ENCODE measurements at regions of chr12 and their contacts with region 1.

Region 1: DNA sequence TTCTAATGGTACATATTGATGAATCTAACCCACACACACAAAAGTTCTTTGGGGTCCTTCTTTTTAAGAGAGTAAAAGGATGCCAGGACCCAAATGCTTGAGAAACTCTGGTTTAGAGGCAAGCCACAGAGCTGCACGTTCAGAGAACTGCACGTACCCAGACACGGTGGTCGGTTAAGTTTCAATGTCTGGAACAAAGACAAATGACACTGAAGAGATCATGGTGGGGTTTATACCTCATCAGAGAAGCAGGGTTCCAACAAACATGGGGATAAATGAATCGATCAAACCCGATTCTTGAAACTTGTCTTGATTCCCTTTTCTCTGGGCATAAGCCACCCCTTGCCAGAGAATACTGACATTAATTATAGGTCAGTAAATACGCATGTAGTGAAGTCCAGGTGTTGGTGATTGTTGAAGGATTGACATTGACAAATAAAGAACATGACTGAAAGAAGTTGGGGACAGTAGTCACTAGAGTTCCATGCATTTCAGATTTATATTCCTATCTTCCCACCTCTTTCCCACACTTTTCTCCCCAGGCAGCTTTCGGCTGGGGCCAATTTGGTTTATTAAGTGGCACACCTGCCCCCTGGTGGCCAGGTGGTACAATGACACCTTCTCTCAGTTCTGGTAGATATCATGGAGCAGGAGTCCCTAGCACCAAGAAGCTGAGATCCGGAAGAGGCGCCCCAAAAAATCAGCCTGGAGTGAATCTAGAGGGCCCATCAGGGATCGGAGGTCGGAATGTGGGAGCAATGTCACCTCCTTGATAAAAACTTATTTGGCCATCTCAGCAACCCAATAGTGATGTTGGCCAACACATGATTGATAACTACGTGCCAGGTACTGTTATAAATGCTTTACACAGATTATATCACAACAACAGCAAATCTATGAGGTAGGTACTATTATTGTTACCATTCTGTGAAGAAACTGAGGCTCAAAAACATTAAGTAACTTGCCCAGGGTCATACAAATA is 17.8 kb upstream of the HDAC7 start:
- DNase-seq: peak; percentile 59
- ATAC-seq: peak; percentile 84
- H3K4me3 ChIP-seq: no peak overlapping the region
- H3K27ac ChIP-seq: peak overlapping the region; percentile 52; the same call in 1 of the 2 replicates
- H3K4me1 ChIP-seq: no peaks in the 10 kb centered on the region
- H3K27me3 ChIP-seq: peaks cover 3% of the 10 kb centered on the region; the same call in 1 of the 2 replicates
- CTCF ChIP-seq: peak; percentile 90

Region 2: GRCh38 chr12:47218191-47218654 is 619.3 kb before region 1 on chr12:
- CTCF ChIA-PET with region 1: interaction called, 12 read pairs
- POLR2A ChIA-PET with region 1: no interaction called
- in situ Hi-C with region 1: no loop called
- intact Hi-C with region 1: no loop called
- DNase-seq: no peak
- ATAC-seq: no peak
- H3K4me3 ChIP-seq: no peak overlapping the region
- H3K27ac ChIP-seq: no peak overlapping the region
- H3K4me1 ChIP-seq: peaks cover 6% of the 10 kb centered on the region; the same call in 1 of the 2 replicates
- H3K27me3 ChIP-seq: no peaks in the 10 kb centered on the region
- CTCF ChIP-seq: no peak

Region 3: DNA sequence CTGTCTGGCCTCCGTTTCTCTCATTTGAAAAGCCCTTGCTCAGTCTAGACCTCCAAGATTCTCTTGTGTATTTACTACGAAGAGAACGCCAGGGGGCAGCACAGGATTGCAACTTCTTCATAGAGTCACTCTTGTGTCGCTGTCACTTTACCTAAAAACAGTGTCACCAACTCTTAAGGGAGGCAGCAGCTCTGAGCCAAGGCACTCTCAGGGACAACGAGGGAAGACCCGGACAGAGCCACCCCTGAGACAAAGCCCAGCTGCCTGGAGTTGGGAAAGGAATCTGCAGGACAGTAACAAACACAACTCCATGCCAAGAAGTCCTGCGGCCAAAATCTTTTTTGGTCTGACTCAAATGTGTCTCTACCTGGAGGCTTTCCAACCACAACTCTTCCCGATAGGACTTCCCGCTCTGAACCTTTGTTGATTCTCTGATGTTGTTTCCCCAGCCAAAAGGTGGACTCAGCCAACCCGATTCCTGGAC is 122.0 kb before region 1 on chr12:
- CTCF ChIA-PET with region 1: interaction called, 4 read pairs
- POLR2A ChIA-PET with region 1: no interaction called
- in situ Hi-C with region 1: no loop called
- intact Hi-C with region 1: loop called (anchors 10 kb)
- DNase-seq: no peak
- ATAC-seq: peak; percentile 88
- H3K4me3 ChIP-seq: no peak overlapping the region
- H3K27ac ChIP-seq: no peak overlapping the region
- H3K4me1 ChIP-seq: peaks cover 3% of the 10 kb centered on the region; the same call in 1 of the 2 replicates
- H3K27me3 ChIP-seq: no peaks in the 10 kb centered on the region
- CTCF ChIP-seq: peak; percentile 88

Region 4: DNA sequence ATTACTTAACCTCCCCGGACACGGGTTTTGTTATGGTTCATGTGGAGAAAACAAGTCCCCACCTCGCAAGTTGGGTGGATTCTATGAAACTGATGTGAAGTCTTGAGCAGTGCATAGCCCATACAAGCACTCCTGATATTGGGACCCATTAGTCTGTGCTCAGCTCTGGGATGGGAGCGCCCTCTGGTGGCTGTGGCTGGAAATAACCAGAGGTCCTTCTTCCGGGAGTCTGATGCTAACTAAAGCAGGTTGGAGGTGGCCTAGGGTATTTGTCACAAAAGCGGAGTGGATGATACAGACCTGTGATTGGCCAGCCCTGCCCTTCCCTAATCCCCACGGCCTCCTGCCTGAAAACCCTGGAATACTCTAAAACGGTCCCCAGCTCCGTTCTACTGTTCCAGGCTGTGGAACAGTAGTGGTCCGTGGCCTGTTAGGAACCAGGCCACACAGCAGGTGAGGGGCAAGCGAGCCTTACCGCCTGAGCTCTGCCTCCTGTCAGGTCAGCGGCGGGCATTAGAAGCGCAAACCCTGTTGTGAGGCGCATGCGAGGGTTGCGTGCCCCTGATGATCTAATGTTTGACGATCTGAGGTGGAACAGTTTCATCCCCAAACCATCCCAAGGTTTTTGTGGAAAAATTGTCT is 58.1 kb before region 1 on chr12:
- CTCF ChIA-PET with region 1: interaction called, 18 read pairs
- POLR2A ChIA-PET with region 1: no interaction called
- in situ Hi-C with region 1: no loop called
- intact Hi-C with region 1: loop called (anchors 5 kb)
- DNase-seq: peak; percentile 76
- ATAC-seq: peak; percentile 90
- H3K4me3 ChIP-seq: no peak overlapping the region
- H3K27ac ChIP-seq: no peak overlapping the region
- H3K4me1 ChIP-seq: peaks cover 33% of the 10 kb centered on the region
- H3K27me3 ChIP-seq: no peaks in the 10 kb centered on the region
- CTCF ChIP-seq: peak; percentile 97

Region 5: GRCh38 chr12:47812797-47813510 is 24.5 kb before region 1 on chr12:
- CTCF ChIA-PET with region 1: interaction called, 16 read pairs
- POLR2A ChIA-PET with region 1: interaction called, 4 read pairs
- in situ Hi-C with region 1: no loop called
- intact Hi-C with region 1: no loop called
- DNase-seq: no peak
- ATAC-seq: peak; percentile 70
- H3K4me3 ChIP-seq: peak overlapping the region; percentile 27 to 51
- H3K27ac ChIP-seq: peak overlapping the region; percentile 89
- H3K4me1 ChIP-seq: peaks cover 87% of the 10 kb centered on the region
- H3K27me3 ChIP-seq: no peaks in the 10 kb centered on the region
- CTCF ChIP-seq: no peak